ENCODE measurements at regions of chr21 and their contacts with region 1.

Region 1: GRCh38 chr21:38766987-38767722 is 38.6 kb upstream of the ETS2 start:
- DNase-seq: peak; percentile 83
- ATAC-seq: peak; percentile 78
- H3K4me3 Mint-ChIP-seq: peak overlapping the region; percentile 46
- H3K27ac Mint-ChIP-seq: peak overlapping the region; percentile 97
- H3K4me1 Mint-ChIP-seq: peaks cover 56% of the 10 kb centered on the region
- H3K27me3 Mint-ChIP-seq: peaks cover 2% of the 10 kb centered on the region

Region 2: GRCh38 chr21:38244885-38245545 is 522.1 kb before region 1 on chr21:
- CTCF ChIA-PET with region 1: no interaction called
- POLR2A ChIA-PET with region 1: no interaction called
- intact Hi-C with region 1: loop called in 1 of 2 experiments (anchors 1 kb)
- DNase-seq: peak; percentile 84
- ATAC-seq: peak; percentile 94
- H3K4me3 Mint-ChIP-seq: peak overlapping the region; percentile 48
- H3K27ac Mint-ChIP-seq: peak overlapping the region; percentile 86
- H3K4me1 Mint-ChIP-seq: peaks cover 38% of the 10 kb centered on the region
- H3K27me3 Mint-ChIP-seq: peaks cover 15% of the 10 kb centered on the region

Region 3: GRCh38 chr21:38679531-38679930 is 87.6 kb before region 1 on chr21:
- CTCF ChIA-PET with region 1: no interaction called
- POLR2A ChIA-PET with region 1: no interaction called
- intact Hi-C with region 1: no loop called
- DNase-seq: no peak
- ATAC-seq: no peak
- H3K4me3 Mint-ChIP-seq: no peak overlapping the region
- H3K27ac Mint-ChIP-seq: no peak overlapping the region
- H3K4me1 Mint-ChIP-seq: no peaks in the 10 kb centered on the region
- H3K27me3 Mint-ChIP-seq: peaks cover 19% of the 10 kb centered on the region

Region 4: GRCh38 chr21:38780879-38781278 is 13.7 kb after region 1 on chr21:
- CTCF ChIA-PET with region 1: interaction called, 6 read pairs
- POLR2A ChIA-PET with region 1: no interaction called
- intact Hi-C with region 1: loop called (anchors 1 kb)
- DNase-seq: peak; percentile 32
- ATAC-seq: peak; percentile 83
- H3K4me3 Mint-ChIP-seq: no peak overlapping the region
- H3K27ac Mint-ChIP-seq: peak overlapping the region; percentile 23
- H3K4me1 Mint-ChIP-seq: peaks cover 37% of the 10 kb centered on the region
- H3K27me3 Mint-ChIP-seq: peaks cover 11% of the 10 kb centered on the region

Region 5: DNA sequence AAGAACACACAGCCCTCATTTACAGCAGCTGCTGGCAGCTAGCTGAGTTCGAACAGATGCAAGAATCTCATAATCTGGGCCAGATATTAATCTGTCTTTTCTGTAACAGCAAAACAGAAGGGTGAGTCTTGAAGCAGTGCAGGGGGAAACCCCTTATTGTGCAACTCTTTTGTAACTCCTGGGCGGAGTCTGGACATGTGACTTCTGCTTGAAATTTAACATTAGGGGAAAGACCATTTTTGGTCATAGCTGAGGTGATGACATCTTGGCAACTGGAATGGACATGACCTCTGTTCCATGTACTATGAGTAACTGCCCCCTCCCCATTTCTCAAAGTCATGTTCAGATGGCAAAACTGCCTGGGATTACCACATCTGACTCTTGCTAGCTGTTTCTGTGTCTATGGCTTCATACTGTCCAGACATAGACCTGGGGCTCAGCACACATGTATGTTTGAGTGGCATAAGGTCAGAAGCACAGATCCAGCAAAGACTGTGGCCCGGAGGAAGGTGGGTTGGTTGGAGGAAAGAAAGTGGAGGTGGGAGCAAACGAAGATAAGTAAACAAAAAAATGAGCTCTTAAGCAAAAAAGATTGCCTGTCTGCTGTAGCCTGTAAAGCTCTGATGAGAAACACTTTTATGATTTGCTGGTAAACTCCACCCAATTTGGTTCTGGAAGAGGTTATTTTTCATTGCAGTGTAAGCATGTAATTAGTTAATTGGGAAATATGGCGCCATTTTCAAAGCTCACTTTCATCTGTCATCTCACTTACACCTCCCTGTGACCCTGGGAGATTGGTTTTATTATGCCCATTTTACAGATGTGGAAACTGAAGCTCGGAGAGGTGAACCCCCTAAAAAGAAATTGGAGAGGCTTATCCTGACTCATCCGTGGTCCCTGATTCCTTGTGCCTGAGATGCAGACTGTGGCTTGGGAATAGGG is 64.6 kb after region 1 on chr21:
- CTCF ChIA-PET with region 1: no interaction called
- POLR2A ChIA-PET with region 1: no interaction called
- intact Hi-C with region 1: loop called (anchors 1 to 2 kb)
- DNase-seq: peak; percentile 75
- ATAC-seq: peak; percentile 97
- H3K4me3 Mint-ChIP-seq: no peak overlapping the region
- H3K27ac Mint-ChIP-seq: peak overlapping the region; percentile 86
- H3K4me1 Mint-ChIP-seq: peaks cover 17% of the 10 kb centered on the region
- H3K27me3 Mint-ChIP-seq: no peaks in the 10 kb centered on the region

Region 6: DNA sequence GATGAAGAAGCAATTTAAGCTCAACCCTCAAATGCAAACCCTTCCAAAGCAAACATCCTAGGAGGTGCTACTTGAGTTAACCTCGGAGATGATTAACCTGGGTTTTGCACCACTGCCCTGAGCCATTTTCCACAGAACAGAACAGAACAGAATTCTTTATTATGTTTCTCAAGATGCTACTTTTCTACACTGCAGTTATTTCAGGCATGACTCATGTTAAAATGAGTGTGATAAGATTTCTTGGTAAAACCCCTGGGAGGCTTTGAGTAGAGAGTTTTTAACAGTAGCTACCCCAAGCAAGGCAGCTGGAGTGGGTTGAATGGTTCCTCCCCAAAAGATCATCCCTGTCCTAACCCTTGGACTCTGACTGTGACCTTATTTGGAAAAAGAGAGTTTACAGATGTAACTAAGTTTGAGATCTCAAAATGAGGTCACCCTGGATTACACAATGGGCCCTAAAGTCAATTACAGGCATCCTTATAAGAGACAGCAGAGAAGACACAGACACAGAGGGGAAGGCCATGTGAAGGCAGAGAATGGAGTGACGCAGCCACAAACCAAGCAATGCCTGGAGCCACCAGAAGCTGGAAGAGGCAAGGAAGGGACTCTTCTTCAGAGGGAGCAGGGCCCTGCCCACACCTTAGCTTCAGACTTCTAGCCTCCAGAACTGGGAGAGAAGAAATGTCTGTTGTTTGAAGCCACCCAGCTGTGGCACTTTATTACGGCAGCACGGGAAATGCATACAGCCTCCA is 192.0 kb after region 1 on chr21:
- CTCF ChIA-PET with region 1: no interaction called
- POLR2A ChIA-PET with region 1: no interaction called
- intact Hi-C with region 1: loop called in 1 of 2 experiments (anchors 1 kb)
- DNase-seq: peak; percentile 46
- ATAC-seq: peak; percentile 96
- H3K4me3 Mint-ChIP-seq: no peak overlapping the region
- H3K27ac Mint-ChIP-seq: peak overlapping the region; percentile 85
- H3K4me1 Mint-ChIP-seq: peaks cover 12% of the 10 kb centered on the region
- H3K27me3 Mint-ChIP-seq: peaks cover under 1% of the 10 kb centered on the region

Region 7: DNA sequence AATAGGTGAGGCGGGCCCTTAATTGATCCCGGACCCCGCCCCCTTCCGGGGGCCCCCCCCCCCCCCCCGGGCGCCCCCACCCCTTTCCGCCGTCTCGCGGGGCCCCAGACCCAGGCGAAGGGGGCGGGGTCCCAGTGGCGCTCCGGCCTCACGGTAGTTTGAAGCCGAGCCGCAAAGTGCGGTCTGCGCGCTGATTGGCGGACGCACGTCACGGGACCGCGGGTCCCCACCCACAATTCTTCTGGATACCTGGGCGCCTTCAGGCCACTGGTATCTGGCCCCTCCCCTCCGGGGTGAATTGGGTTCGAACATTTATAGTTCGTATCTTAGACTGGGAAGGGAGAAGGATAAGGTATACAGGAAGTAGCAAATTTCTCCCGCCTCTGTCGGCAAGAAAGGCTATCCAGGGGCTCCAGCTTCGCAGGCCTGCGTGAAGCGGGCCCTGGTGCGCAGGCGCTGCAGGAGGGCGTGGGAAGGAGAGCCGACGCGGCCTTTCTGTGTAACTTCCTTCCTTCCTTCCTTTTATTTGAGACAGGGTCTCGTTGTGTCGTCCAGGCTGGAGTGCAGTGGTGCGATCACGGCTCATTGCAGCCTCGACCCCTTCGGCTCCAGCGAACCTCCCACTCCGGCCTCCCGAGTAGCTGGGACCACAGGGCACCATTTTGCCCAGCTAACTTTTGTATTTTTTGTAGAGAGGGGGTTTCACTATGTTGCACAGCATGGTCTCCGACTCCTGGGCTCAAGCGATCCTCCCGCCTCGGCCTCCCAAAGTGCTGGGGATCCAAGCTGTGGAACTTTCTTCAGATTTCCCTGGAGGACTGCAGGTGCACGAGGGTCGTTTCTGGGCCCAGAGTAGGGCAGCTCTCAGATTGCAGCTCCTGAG is 582.3 kb after region 1 on chr21:
- CTCF ChIA-PET with region 1: no interaction called
- POLR2A ChIA-PET with region 1: no interaction called
- intact Hi-C with region 1: loop called in 1 of 2 experiments (anchors 1 kb)
- DNase-seq: peak; percentile 99
- ATAC-seq: peak; percentile 89
- H3K4me3 Mint-ChIP-seq: peak overlapping the region; percentile 92
- H3K27ac Mint-ChIP-seq: peak overlapping the region; percentile 100
- H3K4me1 Mint-ChIP-seq: peaks cover 33% of the 10 kb centered on the region
- H3K27me3 Mint-ChIP-seq: no peaks in the 10 kb centered on the region